Activated CD4-positive, alpha-beta T cell treated with anti-CD3 and anti-CD28 coated beads for 36 hours (primary cell): ENCODE measurements at regions of chr12 and their contacts with region 1.

Region 1: GRCh38 chr12:43079476-43079875 is 472.5 kb downstream of the ADAMTS20 start:
- DNase-seq: no peak
- ATAC-seq: no peak
- H3K4me3 Mint-ChIP-seq: no peak overlapping the region
- H3K27ac Mint-ChIP-seq: no peak overlapping the region
- H3K4me1 Mint-ChIP-seq: no peaks in the 10 kb centered on the region
- H3K27me3 Mint-ChIP-seq: no peaks in the 10 kb centered on the region

Region 2: DNA sequence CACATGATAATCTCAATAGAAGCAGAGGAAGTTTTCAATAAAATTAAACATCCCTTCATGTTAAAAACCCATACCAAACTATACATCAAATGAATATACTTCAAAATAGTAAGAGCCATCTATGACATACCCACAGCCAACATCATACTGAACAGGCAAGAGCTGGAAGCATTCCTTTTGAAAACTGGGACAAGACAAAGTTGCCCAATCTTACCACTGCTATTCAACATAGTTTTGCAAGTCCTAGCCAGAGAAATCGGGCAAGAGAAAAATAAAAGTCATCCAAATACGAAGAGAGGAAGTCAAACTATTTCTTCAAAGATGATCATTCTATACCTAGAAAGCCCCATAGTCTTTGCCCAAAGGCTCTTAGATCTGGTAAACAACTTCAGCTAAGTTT is 35.2 kb before region 1 on chr12:
- CTCF ChIA-PET with region 1: no interaction called
- POLR2A ChIA-PET with region 1: no interaction called
- intact Hi-C with region 1: no loop called
- DNase-seq: no peak
- ATAC-seq: no peak
- H3K4me3 Mint-ChIP-seq: no peak overlapping the region
- H3K27ac Mint-ChIP-seq: no peak overlapping the region
- H3K4me1 Mint-ChIP-seq: no peaks in the 10 kb centered on the region
- H3K27me3 Mint-ChIP-seq: no peaks in the 10 kb centered on the region

Region 3: DNA sequence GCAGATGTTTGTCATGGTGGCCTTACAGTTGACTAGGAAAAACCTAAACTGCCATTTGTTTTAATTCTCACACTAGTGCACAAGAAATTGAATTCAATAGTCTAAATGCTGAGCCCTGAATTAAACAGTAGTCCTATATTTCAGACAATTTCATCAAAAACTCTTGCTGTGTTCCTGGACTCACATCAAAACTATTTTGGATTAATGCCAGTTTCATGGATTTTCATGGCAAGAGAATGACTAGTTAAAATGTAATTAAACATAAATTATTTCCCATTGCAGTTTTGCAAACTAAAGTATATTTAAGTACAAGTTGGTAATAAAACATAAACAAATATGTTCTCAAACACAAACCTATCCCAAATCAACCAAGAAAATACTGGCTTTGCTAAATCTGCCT is 21.9 kb before region 1 on chr12:
- CTCF ChIA-PET with region 1: no interaction called
- POLR2A ChIA-PET with region 1: no interaction called
- intact Hi-C with region 1: no loop called
- DNase-seq: no peak
- ATAC-seq: no peak
- H3K4me3 Mint-ChIP-seq: no peak overlapping the region
- H3K27ac Mint-ChIP-seq: no peak overlapping the region
- H3K4me1 Mint-ChIP-seq: no peaks in the 10 kb centered on the region
- H3K27me3 Mint-ChIP-seq: no peaks in the 10 kb centered on the region

Region 4: GRCh38 chr12:43123461-43123860 is 44.0 kb after region 1 on chr12:
- CTCF ChIA-PET with region 1: no interaction called
- POLR2A ChIA-PET with region 1: no interaction called
- intact Hi-C with region 1: loop called in 1 of 2 experiments (anchors 1 kb)
- DNase-seq: no peak
- ATAC-seq: no peak
- H3K4me3 Mint-ChIP-seq: no peak overlapping the region
- H3K27ac Mint-ChIP-seq: no peak overlapping the region
- H3K4me1 Mint-ChIP-seq: no peaks in the 10 kb centered on the region
- H3K27me3 Mint-ChIP-seq: no peaks in the 10 kb centered on the region